T-cell (primary cell): ENCODE measurements at regions of chr14 and their contacts with region 1.

Region 1: DNA sequence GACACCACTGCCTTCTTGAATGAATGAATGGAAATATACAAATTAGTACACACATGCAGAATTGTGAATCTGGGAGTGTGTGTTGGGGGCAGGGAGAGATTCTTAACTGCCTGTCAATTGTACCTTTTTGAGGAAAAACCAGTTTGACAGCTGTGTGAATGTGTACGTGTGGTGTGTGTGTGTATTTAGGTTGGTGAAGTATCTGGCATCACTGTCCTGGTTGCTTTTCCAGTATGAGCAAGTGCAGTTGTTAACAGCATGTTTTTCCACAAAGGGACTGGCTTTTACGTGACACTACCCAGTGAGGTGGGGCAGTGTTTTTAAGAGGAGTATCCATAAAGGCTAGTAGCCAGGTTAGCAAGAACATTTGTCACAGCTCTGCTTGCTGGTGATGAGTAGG is 56.1 kb downstream of the DAAM1 start:
- DNase-seq: no peak
- ATAC-seq: no peak
- H3K4me3 ChIP-seq: no peak overlapping the region
- H3K4me3 Mint-ChIP-seq: no peak overlapping the region
- H3K27ac ChIP-seq: no peak overlapping the region
- H3K27ac Mint-ChIP-seq: no peak overlapping the region
- H3K4me1 ChIP-seq: no peaks in the 10 kb centered on the region
- H3K4me1 Mint-ChIP-seq: peaks cover 13 to 23% (median 21%) of the 10 kb centered on the region in 3 donors
- H3K27me3 ChIP-seq: no peaks in the 10 kb centered on the region
- H3K27me3 Mint-ChIP-seq: no peaks in the 10 kb centered on the region

Region 2: GRCh38 chr14:58131386-58131785 is 1113.2 kb before region 1 on chr14:
- CTCF ChIA-PET with region 1: no interaction called
- POLR2A ChIA-PET with region 1: interaction called in 1 of 2 experiments, 10 read pairs
- DNase-seq: no peak
- ATAC-seq: no peak
- H3K4me3 ChIP-seq: no peak overlapping the region
- H3K4me3 Mint-ChIP-seq: no peak overlapping the region
- H3K27ac ChIP-seq: no peak overlapping the region
- H3K27ac Mint-ChIP-seq: no peak overlapping the region
- H3K4me1 ChIP-seq: no peaks in the 10 kb centered on the region
- H3K4me1 Mint-ChIP-seq: no peaks in the 10 kb centered on the region
- H3K27me3 ChIP-seq: no peaks in the 10 kb centered on the region
- H3K27me3 Mint-ChIP-seq: peaks cover 0 to 7% of the 10 kb centered on the region in 2 donors

Region 3: GRCh38 chr14:59819446-59820088 is 575.0 kb after region 1 on chr14:
- CTCF ChIA-PET with region 1: interaction called in 1 of 2 experiments, 10 read pairs
- POLR2A ChIA-PET with region 1: no interaction called
- DNase-seq: no peak
- ATAC-seq: no peak
- H3K4me3 ChIP-seq: no peak overlapping the region
- H3K4me3 Mint-ChIP-seq: no peak overlapping the region
- H3K27ac ChIP-seq: no peak overlapping the region
- H3K27ac Mint-ChIP-seq: no peak overlapping the region
- H3K4me1 ChIP-seq: no peaks in the 10 kb centered on the region
- H3K4me1 Mint-ChIP-seq: no peaks in the 10 kb centered on the region
- H3K27me3 ChIP-seq: no peaks in the 10 kb centered on the region
- H3K27me3 Mint-ChIP-seq: peaks cover 10 to 12% of the 10 kb centered on the region in 2 donors